CD8-positive, alpha-beta T cell (primary cell): ENCODE measurements at regions of chr7 and their contacts with region 1.

Region 1: GRCh38 chr7:42931834-42932651 is at the starts of genes MRPL32 and PSMA2:
- DNase-seq: peak; percentile 89 to 98 (median 93)
- ATAC-seq: peak; percentile 98
- H3K4me3 ChIP-seq: peak within 1 kb of the TSS; percentile 93 to 98
- H3K4me3 Mint-ChIP-seq: peak within 1 kb of the TSS; percentile 100
- H3K27ac ChIP-seq: peak within 1 kb of the TSS; percentile 87 to 91
- H3K27ac Mint-ChIP-seq: peak within 1 kb of the TSS; percentile 98
- H3K4me1 ChIP-seq: peaks cover 45% of the 10 kb centered on the region
- H3K4me1 Mint-ChIP-seq: peaks cover 79% of the 10 kb centered on the region
- H3K27me3 ChIP-seq: no peaks in the 10 kb centered on the region
- H3K27me3 Mint-ChIP-seq: no peaks in the 10 kb centered on the region
- CTCF ChIP-seq: no peak
- total RNA-seq, gene MRPL32: 64.9 to 65.1 TPM
- total RNA-seq, gene PSMA2: 43.6 to 47.9 TPM

Region 2: GRCh38 chr7:42911454-42912447 is 20.3 kb before region 1 on chr7 and contains the start of gene C7orf25:
- CTCF ChIA-PET with region 1: interaction called, 7 read pairs
- POLR2A ChIA-PET with region 1: interaction called, 27 read pairs
- intact Hi-C with region 1: loop called (anchors 1 kb)
- DNase-seq: peak; percentile 87 to 97 (median 95)
- ATAC-seq: peak; percentile 92
- H3K4me3 ChIP-seq: peak within 1 kb of the TSS; percentile 51 to 65
- H3K4me3 Mint-ChIP-seq: peak within 1 kb of the TSS; percentile 87
- H3K27ac ChIP-seq: peak within 1 kb of the TSS; percentile 54 to 77
- H3K27ac Mint-ChIP-seq: peak within 1 kb of the TSS; percentile 93
- H3K4me1 ChIP-seq: peaks cover 34% of the 10 kb centered on the region
- H3K4me1 Mint-ChIP-seq: peaks cover 50% of the 10 kb centered on the region
- H3K27me3 ChIP-seq: no peaks in the 10 kb centered on the region
- H3K27me3 Mint-ChIP-seq: no peaks in the 10 kb centered on the region
- CTCF ChIP-seq: no peak
- total RNA-seq, gene C7orf25: 2.1 to 2.2 TPM

Region 3: GRCh38 chr7:43869006-43869866 is 937.2 kb after region 1 on chr7 and contains the start of gene MRPS24:
- CTCF ChIA-PET with region 1: no interaction called
- POLR2A ChIA-PET with region 1: no interaction called
- intact Hi-C with region 1: loop called in 1 of 2 experiments (anchors 2 kb)
- DNase-seq: peak; percentile 91 to 97 (median 95)
- ATAC-seq: peak; percentile 100
- H3K4me3 ChIP-seq: peak within 1 kb of the TSS; percentile 69 to 76
- H3K4me3 Mint-ChIP-seq: peak within 1 kb of the TSS; percentile 94
- H3K27ac ChIP-seq: peak within 1 kb of the TSS; percentile 50 to 69
- H3K27ac Mint-ChIP-seq: peak within 1 kb of the TSS; percentile 93
- H3K4me1 ChIP-seq: peaks cover 14% of the 10 kb centered on the region
- H3K4me1 Mint-ChIP-seq: peaks cover 23% of the 10 kb centered on the region
- H3K27me3 ChIP-seq: no peaks in the 10 kb centered on the region
- H3K27me3 Mint-ChIP-seq: no peaks in the 10 kb centered on the region
- CTCF ChIP-seq: no peak
- total RNA-seq, gene MRPS24: 61.7 to 74.4 TPM

Region 4: GRCh38 chr7:44200647-44201461 is 1268.8 kb after region 1 on chr7 and contains the start of gene YKT6:
- CTCF ChIA-PET with region 1: no interaction called
- POLR2A ChIA-PET with region 1: interaction called, 4 read pairs
- intact Hi-C with region 1: loop called in 1 of 2 experiments (anchors 10 kb)
- DNase-seq: peak; percentile 84 to 98 (median 95)
- ATAC-seq: peak; percentile 98
- H3K4me3 ChIP-seq: peak within 1 kb of the TSS; percentile 72 to 97
- H3K4me3 Mint-ChIP-seq: peak within 1 kb of the TSS; percentile 81
- H3K27ac ChIP-seq: peak within 1 kb of the TSS; percentile 65 to 78
- H3K27ac Mint-ChIP-seq: peak within 1 kb of the TSS; percentile 80
- H3K4me1 ChIP-seq: peaks cover 13% of the 10 kb centered on the region
- H3K4me1 Mint-ChIP-seq: peaks cover 34% of the 10 kb centered on the region
- H3K27me3 ChIP-seq: no peaks in the 10 kb centered on the region
- H3K27me3 Mint-ChIP-seq: peaks cover 5% of the 10 kb centered on the region
- CTCF ChIP-seq: peak; percentile 43
- total RNA-seq, gene YKT6: 111 to 114 TPM